ENCODE measurements at regions of chr15 and their contacts with region 1.

Region 1: DNA sequence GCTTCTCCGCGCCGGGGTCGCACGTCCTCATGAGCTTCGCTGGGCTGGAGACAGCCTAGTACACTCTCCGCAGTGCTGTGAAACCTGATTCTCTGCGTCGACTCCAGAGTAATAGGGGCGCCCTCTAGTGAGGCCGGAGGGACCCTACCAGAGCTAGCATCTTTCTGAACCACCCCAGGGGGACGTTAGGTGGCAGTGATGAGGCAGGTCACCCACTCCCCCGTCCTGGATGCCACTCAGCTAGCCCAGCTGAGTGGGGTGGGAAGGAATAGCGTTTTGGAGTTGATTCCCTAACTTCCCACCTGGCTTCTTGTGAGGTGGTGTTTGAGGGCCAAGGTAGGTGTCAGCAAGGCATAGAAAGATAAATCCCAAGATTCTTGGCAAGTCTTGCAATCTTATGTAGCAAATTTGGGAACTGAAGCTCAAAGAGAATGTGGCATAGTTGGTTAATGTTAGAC is 4.0 kb downstream of the DUOXA2 start:
- DNase-seq: peak; percentile 92
- ATAC-seq: peak; percentile 99
- H3K4me3 Mint-ChIP-seq: peak overlapping the region; percentile 13
- H3K27ac Mint-ChIP-seq: no peak overlapping the region
- H3K4me1 Mint-ChIP-seq: peaks cover 27% of the 10 kb centered on the region
- H3K27me3 Mint-ChIP-seq: peaks cover 46% of the 10 kb centered on the region

Region 2: DNA sequence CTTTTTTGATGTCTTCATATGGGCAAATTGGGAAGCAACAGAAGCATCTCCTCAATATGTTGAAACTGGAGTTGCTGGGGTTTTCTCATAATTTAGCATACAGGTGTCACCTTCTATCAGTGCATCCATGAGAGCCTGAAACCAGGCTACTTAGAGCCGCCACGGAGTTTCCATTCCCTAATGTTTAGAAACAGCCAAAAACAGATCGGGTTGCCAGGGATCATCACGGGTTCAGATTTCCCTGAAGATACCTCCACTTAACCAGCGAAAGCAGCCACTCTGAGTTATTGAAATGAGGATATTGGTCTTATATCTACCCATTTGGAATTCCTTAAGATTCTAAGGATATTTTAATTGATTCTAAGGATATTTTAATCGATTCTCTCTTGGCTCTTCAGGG is 147.1 kb before region 1 on chr15:
- CTCF ChIA-PET with region 1: interaction called, 6 read pairs
- POLR2A ChIA-PET with region 1: no interaction called
- intact Hi-C with region 1: loop called (anchors 5 kb)
- DNase-seq: no peak
- ATAC-seq: no peak
- H3K4me3 Mint-ChIP-seq: no peak overlapping the region
- H3K27ac Mint-ChIP-seq: no peak overlapping the region
- H3K4me1 Mint-ChIP-seq: no peaks in the 10 kb centered on the region
- H3K27me3 Mint-ChIP-seq: no peaks in the 10 kb centered on the region

Region 3: DNA sequence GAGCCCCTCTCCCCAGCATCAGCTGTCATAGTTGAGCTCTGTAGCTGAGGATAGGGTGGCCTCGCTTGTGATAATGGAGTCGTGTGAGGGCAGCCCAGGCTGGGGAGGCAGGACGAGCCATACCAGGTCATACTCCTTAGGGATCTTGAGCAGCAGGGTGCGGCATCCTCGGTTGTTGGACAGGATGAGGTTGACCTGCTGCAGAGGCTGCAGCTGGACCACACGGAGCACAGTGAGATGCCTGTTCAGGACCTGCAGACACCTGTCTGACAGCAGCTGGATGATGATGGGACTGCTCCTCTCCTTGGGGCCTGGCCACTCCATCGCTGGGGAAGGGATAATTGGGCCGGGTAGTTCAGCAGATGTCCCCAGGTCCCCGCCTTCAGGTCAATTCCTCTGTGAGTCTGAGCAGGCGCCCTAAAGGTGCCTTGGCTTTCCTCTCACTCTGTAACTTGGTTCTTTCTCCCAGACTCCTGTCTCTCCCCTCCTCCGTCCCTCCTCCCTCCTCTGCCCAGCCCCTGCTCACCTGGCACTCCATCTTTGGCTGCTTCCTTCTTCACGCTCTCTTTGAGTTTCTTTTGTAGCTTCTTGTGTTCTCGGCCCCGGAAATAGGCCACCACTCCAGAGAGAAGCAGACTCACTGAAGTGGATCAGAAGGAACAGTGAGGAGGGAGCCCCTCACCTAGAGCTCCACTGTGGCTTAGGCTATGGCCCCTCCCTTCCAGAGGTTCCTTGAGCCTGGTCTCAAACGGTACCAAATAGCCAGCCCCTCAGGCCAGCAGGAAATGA is 12.0 kb before region 1 on chr15:
- CTCF ChIA-PET with region 1: interaction called, 20 read pairs
- POLR2A ChIA-PET with region 1: no interaction called
- intact Hi-C with region 1: no loop called
- DNase-seq: no peak
- ATAC-seq: no peak
- H3K4me3 Mint-ChIP-seq: no peak overlapping the region
- H3K27ac Mint-ChIP-seq: no peak overlapping the region
- H3K4me1 Mint-ChIP-seq: no peaks in the 10 kb centered on the region
- H3K27me3 Mint-ChIP-seq: peaks cover 21% of the 10 kb centered on the region

Region 4: GRCh38 chr15:45157974-45158373 is 39.8 kb after region 1 on chr15:
- CTCF ChIA-PET with region 1: interaction called, 18 read pairs
- POLR2A ChIA-PET with region 1: no interaction called
- intact Hi-C with region 1: no loop called
- DNase-seq: no peak
- ATAC-seq: no peak
- H3K4me3 Mint-ChIP-seq: no peak overlapping the region
- H3K27ac Mint-ChIP-seq: no peak overlapping the region
- H3K4me1 Mint-ChIP-seq: peaks cover 8% of the 10 kb centered on the region
- H3K27me3 Mint-ChIP-seq: no peaks in the 10 kb centered on the region

Region 5: GRCh38 chr15:45205192-45205591 is 87.0 kb after region 1 on chr15:
- CTCF ChIA-PET with region 1: interaction called, 21 read pairs
- POLR2A ChIA-PET with region 1: no interaction called
- intact Hi-C with region 1: no loop called
- DNase-seq: peak; percentile 86
- ATAC-seq: peak; percentile 63
- H3K4me3 Mint-ChIP-seq: no peak overlapping the region
- H3K27ac Mint-ChIP-seq: no peak overlapping the region
- H3K4me1 Mint-ChIP-seq: peaks cover 7% of the 10 kb centered on the region
- H3K27me3 Mint-ChIP-seq: peaks cover 2% of the 10 kb centered on the region

Region 6: GRCh38 chr15:45544266-45545023 is 426.3 kb after region 1 on chr15:
- CTCF ChIA-PET with region 1: no interaction called
- POLR2A ChIA-PET with region 1: no interaction called
- intact Hi-C with region 1: no loop called
- DNase-seq: no peak
- ATAC-seq: no peak
- H3K4me3 Mint-ChIP-seq: no peak overlapping the region
- H3K27ac Mint-ChIP-seq: no peak overlapping the region
- H3K4me1 Mint-ChIP-seq: no peaks in the 10 kb centered on the region
- H3K27me3 Mint-ChIP-seq: peaks cover 1% of the 10 kb centered on the region

Measured in activated CD4-positive, alpha-beta T cell treated with anti-CD3 and anti-CD28 coated beads for 36 hours (primary cell).